B cell (primary cell): ENCODE measurements at regions of chr9 and their contacts with region 1.

Region 1: DNA sequence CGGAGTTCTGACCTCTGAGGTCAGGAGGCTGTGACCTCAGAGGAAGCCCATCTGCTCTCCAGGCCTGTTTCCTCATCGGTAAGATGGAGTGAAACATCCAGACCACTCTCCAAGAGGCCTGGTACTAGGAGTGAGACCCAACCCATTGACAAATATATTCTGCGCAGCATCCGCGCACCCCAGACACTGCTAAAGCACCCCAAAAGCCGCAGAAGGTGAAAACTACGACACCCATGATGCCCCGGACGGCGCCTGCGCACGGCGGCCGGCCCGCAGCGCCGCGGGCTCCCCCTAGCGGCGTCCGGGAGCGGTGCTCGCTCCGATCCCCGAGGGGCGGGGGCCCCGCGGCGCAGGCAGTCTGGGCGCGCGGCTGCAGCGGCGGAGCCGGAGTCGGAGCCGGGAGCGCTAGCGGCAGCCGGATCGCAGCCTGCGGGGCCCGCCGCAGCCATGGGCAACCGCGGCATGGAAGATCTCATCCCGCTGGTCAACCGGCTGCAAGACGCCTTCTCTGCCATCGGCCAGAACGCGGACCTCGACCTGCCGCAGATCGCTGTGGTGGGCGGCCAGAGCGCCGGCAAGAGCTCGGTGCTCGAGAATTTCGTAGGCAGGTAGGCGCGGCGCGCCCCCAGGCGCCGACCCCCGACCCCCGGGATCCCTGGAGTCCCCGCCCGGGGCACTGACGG is at the start of gene DNM1:
- DNase-seq: peak; percentile 86
- ATAC-seq: peak; percentile 97
- H3K4me3 ChIP-seq: peak within 1 kb of the TSS in 4 of 5 experiments; percentile 42 to 64 (median 58)
- H3K4me3 Mint-ChIP-seq: peak within 1 kb of the TSS; percentile 90
- H3K27ac ChIP-seq: peak within 1 kb of the TSS in 1 of 2 donors; percentile 11
- H3K27ac Mint-ChIP-seq: peak within 1 kb of the TSS; percentile 80
- H3K4me1 ChIP-seq: peaks cover 12 to 16% of the 10 kb centered on the region in 2 donors
- H3K4me1 Mint-ChIP-seq: peaks cover 9% of the 10 kb centered on the region
- H3K27me3 ChIP-seq: peaks cover 0 to 29% (median 8%) of the 10 kb centered on the region in 4 experiments
- H3K27me3 Mint-ChIP-seq: peaks cover 21% of the 10 kb centered on the region
- CTCF ChIP-seq: peak; percentile 90
- total RNA-seq, gene DNM1: 1.3 and 1.9 TPM in 2 replicates

Region 2: DNA sequence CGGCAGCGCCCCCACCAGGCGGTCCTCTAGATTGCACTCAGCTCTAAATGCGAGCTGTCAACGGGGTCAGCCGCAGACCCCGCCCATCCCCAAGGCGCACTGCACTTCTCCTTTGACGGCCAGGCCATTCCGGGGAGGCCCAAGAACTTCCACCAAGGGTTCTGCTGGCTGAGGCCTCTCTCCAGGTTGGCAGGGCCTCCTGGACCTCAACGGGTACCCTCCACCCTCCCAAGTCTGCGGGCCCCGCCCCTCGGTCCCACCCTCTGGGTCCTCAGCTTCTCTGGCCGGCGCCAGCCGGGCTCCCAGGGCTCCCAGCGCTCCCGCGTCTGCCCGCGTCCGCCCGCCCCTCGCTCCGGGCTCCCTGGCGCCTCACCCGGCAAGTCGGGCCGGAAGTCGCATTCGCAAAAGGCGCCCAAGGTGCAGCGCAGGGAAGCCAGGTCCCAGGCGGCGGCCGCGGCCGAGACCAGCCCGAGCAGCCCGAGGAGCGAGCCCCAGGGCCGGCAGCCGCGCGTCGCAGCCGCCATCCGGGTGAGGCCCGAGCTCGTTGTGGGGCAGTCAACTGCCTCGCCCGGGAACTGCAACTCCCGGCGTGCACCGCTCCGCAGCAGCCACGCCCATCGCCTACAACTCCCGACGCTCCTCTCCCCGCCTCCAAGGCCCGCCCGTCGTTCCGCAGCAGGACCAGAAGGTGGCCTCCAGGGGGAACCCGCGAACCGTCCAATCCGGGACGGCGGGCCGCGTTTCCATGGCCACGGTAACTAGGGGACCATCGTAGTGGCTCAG is 468.2 kb before region 1 on chr9 and contains the start of gene TOR2A:
- CTCF ChIA-PET with region 1: no interaction called
- POLR2A ChIA-PET with region 1: no interaction called
- intact Hi-C with region 1: no loop called
- DNase-seq: peak; percentile 99
- ATAC-seq: peak; percentile 92
- H3K4me3 ChIP-seq: peak within 1 kb of the TSS in 4 of 5 experiments; percentile 45 to 76 (median 64)
- H3K4me3 Mint-ChIP-seq: peak within 1 kb of the TSS; percentile 85
- H3K27ac ChIP-seq: peak within 1 kb of the TSS; percentile 80 to 96
- H3K27ac Mint-ChIP-seq: peak within 1 kb of the TSS; percentile 88
- H3K4me1 ChIP-seq: peaks cover 11 to 16% of the 10 kb centered on the region in 2 donors
- H3K4me1 Mint-ChIP-seq: peaks cover 16% of the 10 kb centered on the region
- H3K27me3 ChIP-seq: no peaks in the 10 kb centered on the region
- H3K27me3 Mint-ChIP-seq: no peaks in the 10 kb centered on the region
- CTCF ChIP-seq: peak; percentile 49
- total RNA-seq, gene TOR2A: 14.3 and 15.8 TPM in 2 replicates

Region 3: DNA sequence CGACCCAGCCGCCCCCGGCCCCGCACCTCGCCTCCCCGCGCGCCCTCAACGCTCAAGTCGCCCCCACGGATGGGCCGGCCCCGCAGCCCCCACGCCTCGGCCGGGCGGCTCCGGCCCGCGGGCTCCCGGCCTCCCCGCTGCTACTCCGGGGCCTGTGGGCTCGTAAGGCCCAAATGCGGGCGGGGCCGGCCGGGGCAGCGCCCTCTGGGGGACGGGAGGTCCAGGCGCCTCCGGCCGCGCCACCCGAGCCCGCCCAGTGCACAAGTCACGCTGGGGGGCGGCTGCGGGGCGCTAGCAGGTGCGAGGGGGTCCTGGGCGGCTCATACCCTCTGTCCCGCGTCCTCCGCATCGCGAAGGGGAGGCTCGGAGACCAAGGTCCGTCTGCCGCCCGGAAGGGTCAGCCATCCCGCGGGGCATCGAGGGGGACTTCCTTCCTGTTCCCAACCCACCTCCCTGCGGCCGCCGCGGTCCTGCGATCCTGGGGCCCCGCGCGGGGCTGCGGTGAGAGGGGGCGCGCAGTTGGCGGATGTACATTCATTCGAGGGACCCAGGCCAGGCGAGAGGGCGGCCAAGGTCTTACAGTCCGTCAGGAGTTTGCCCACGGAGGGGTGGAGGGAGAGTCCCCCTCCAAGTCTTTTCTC is 11.6 kb before region 1 on chr9 and contains the start of gene CIZ1:
- CTCF ChIA-PET with region 1: interaction called, 5 read pairs
- POLR2A ChIA-PET with region 1: interaction called, 3 read pairs
- intact Hi-C with region 1: loop called (anchors 1 kb)
- DNase-seq: peak; percentile 88
- ATAC-seq: peak; percentile 90
- H3K4me3 ChIP-seq: peak within 1 kb of the TSS; percentile 26 to 82 (median 73)
- H3K4me3 Mint-ChIP-seq: peak within 1 kb of the TSS; percentile 94
- H3K27ac ChIP-seq: peak within 1 kb of the TSS; percentile 44 to 76
- H3K27ac Mint-ChIP-seq: peak within 1 kb of the TSS; percentile 92
- H3K4me1 ChIP-seq: peaks cover 12 to 24% of the 10 kb centered on the region in 2 donors
- H3K4me1 Mint-ChIP-seq: peaks cover 29% of the 10 kb centered on the region
- H3K27me3 ChIP-seq: no peaks in the 10 kb centered on the region
- H3K27me3 Mint-ChIP-seq: no peaks in the 10 kb centered on the region
- CTCF ChIP-seq: peak; percentile 84
- total RNA-seq, gene CIZ1: 160 and 169 TPM in 2 replicates

Region 4: GRCh38 chr9:128218518-128219389 is 15.6 kb after region 1 on chr9:
- CTCF ChIA-PET with region 1: interaction called, 4 read pairs
- POLR2A ChIA-PET with region 1: interaction called, 8 read pairs
- intact Hi-C with region 1: loop called (anchors 1 kb)
- DNase-seq: peak; percentile 94
- ATAC-seq: peak; percentile 95
- H3K4me3 ChIP-seq: peak overlapping the region; percentile 9 to 67 (median 54)
- H3K4me3 Mint-ChIP-seq: peak overlapping the region; percentile 85
- H3K27ac ChIP-seq: no peak overlapping the region
- H3K27ac Mint-ChIP-seq: peak overlapping the region; percentile 12
- H3K4me1 ChIP-seq: peaks cover 9 to 16% of the 10 kb centered on the region in 2 donors
- H3K4me1 Mint-ChIP-seq: peaks cover 11% of the 10 kb centered on the region
- H3K27me3 ChIP-seq: peaks cover 0 to 5% (median 0%) of the 10 kb centered on the region in 4 experiments
- H3K27me3 Mint-ChIP-seq: peaks cover 4% of the 10 kb centered on the region
- CTCF ChIP-seq: no peak

Region 5: GRCh38 chr9:128374221-128374675 is 171.1 kb after region 1 on chr9:
- CTCF ChIA-PET with region 1: no interaction called
- POLR2A ChIA-PET with region 1: no interaction called
- intact Hi-C with region 1: no loop called
- DNase-seq: no peak
- ATAC-seq: no peak
- H3K4me3 ChIP-seq: no peak overlapping the region
- H3K4me3 Mint-ChIP-seq: no peak overlapping the region
- H3K27ac ChIP-seq: no peak overlapping the region
- H3K27ac Mint-ChIP-seq: no peak overlapping the region
- H3K4me1 ChIP-seq: peaks cover 15 to 23% of the 10 kb centered on the region in 2 donors
- H3K4me1 Mint-ChIP-seq: peaks cover 30% of the 10 kb centered on the region
- H3K27me3 ChIP-seq: no peaks in the 10 kb centered on the region
- H3K27me3 Mint-ChIP-seq: no peaks in the 10 kb centered on the region
- CTCF ChIP-seq: no peak